PC-3 (cell line): ENCODE measurements at regions of chr12 and their contacts with region 1.

Region 1: GRCh38 chr12:42023733-42024494 is 120.8 kb downstream of the GXYLT1 start:
- DNase-seq: peak; percentile 81
- ATAC-seq: peak; percentile 95
- H3K4me3 ChIP-seq: peak overlapping the region; percentile 61
- H3K27ac ChIP-seq: no peak overlapping the region
- H3K4me1 ChIP-seq: no peaks in the 10 kb centered on the region
- H3K27me3 ChIP-seq: no peaks in the 10 kb centered on the region
- CTCF ChIP-seq: peak; percentile 97

Region 2: GRCh38 chr12:40843495-40843894 is 1180.4 kb before region 1 on chr12:
- CTCF ChIA-PET with region 1: interaction called, 11 read pairs
- POLR2A ChIA-PET with region 1: no interaction called
- intact Hi-C with region 1: no loop called
- DNase-seq: no peak
- ATAC-seq: no peak
- H3K4me3 ChIP-seq: no peak overlapping the region
- H3K27ac ChIP-seq: no peak overlapping the region
- H3K4me1 ChIP-seq: no peaks in the 10 kb centered on the region
- H3K27me3 ChIP-seq: peaks cover 58% of the 10 kb centered on the region
- CTCF ChIP-seq: no peak

Region 3: DNA sequence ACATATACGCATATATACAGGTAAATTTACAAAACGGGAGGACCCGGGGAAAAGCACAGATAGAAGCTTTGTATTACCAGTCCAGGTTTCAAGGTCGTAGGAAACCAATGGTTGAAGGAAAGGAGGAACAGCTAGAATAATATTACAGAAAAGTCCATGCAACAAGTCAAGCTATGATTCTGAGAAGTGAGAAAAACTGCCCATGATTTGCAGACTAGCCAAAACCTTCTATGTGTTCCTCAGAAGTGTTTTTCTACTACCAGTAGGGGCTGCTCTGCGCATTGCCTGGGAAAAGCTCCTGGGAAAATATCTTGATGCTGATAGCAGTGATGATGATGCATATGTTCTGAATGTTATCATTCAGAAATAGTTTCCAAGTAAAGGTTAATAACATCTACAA is 833.6 kb before region 1 on chr12:
- CTCF ChIA-PET with region 1: no interaction called
- POLR2A ChIA-PET with region 1: no interaction called
- intact Hi-C with region 1: loop called (anchors 5 kb)
- DNase-seq: peak; percentile 44
- ATAC-seq: 0 out of 2 replicates have a peak, but pooled peaks have one; percentile 53
- H3K4me3 ChIP-seq: no peak overlapping the region
- H3K27ac ChIP-seq: no peak overlapping the region
- H3K4me1 ChIP-seq: no peaks in the 10 kb centered on the region
- H3K27me3 ChIP-seq: peaks cover 59% of the 10 kb centered on the region
- CTCF ChIP-seq: peak; percentile 59

Region 4: DNA sequence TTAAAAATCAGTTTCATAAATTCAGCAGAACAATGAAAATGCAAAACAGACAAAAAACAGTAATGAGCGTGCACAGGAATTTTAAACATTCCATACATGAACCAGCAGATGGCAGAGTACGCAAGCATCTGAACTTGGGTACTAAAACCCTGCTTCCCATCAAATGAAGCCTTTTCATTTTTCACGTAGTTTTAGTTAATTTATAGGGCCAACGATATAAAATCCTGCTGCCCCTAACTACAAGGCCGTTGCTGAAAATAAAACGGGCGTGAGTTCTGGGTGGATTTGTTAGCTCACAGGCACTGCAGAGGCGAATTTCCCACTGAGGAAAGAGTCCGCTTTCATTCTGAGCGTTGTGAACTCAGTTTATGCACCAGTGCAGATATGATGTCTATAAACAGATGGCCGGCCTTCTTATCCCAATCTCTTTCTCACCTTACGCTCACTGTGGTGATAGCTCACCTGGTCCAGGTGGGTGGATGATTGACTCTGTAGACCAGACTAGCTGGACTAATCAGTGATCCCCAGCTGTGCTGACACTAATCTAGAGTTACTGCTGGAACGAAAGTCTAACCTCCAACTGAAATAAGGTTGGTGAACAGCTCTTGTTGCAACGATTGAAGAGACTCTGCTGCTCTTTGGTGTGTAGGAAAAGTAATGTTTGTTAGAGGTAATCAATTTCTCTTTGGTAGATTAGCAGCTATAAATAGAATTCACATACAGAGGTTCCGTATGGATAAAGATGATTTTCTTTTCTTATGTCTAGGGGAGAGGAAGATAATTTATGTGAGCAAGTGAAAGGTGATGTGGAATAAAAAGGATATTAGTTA is 746.6 kb before region 1 on chr12:
- CTCF ChIA-PET with region 1: no interaction called
- POLR2A ChIA-PET with region 1: no interaction called
- intact Hi-C with region 1: loop called (anchors 2 kb)
- DNase-seq: peak; percentile 57
- ATAC-seq: peak; percentile 50
- H3K4me3 ChIP-seq: no peak overlapping the region
- H3K27ac ChIP-seq: no peak overlapping the region
- H3K4me1 ChIP-seq: no peaks in the 10 kb centered on the region
- H3K27me3 ChIP-seq: peaks cover 20% of the 10 kb centered on the region; the same call in 1 of the 2 replicates
- CTCF ChIP-seq: peak; percentile 85

Region 5: GRCh38 chr12:41536813-41537490 is 487.0 kb before region 1 on chr12:
- CTCF ChIA-PET with region 1: no interaction called
- POLR2A ChIA-PET with region 1: no interaction called
- intact Hi-C with region 1: no loop called
- DNase-seq: no peak
- ATAC-seq: no peak
- H3K4me3 ChIP-seq: no peak overlapping the region
- H3K27ac ChIP-seq: no peak overlapping the region
- H3K4me1 ChIP-seq: no peaks in the 10 kb centered on the region
- H3K27me3 ChIP-seq: 0 out of 2 replicates have a peak, but pooled peaks cover 9% of the 10 kb centered on the region
- CTCF ChIP-seq: no peak

Region 6: GRCh38 chr12:41917855-41918460 is 106.0 kb before region 1 on chr12:
- CTCF ChIA-PET with region 1: no interaction called
- POLR2A ChIA-PET with region 1: no interaction called
- intact Hi-C with region 1: no loop called
- DNase-seq: peak; percentile 36
- ATAC-seq: peak; percentile 43
- H3K4me3 ChIP-seq: no peak overlapping the region
- H3K27ac ChIP-seq: no peak overlapping the region
- H3K4me1 ChIP-seq: no peaks in the 10 kb centered on the region
- H3K27me3 ChIP-seq: peaks cover 50% of the 10 kb centered on the region
- CTCF ChIP-seq: no peak

Region 7: DNA sequence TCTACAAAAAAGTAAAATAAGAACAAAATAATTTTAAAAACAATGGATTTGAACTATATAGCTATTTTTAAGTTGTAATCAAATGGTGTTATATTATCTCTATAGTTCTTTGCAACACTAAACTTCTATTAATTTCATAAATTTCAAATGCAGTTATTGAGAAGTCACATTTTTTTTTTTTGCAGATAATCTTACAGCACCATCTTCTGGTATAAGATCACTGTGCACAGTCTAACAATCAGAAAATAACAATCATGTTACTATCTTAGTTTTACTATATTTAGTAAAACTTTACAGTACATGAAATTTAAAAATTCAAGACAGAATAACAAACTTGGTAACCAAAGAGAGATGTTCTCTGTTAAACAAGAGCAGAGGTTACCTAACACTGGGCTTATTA is 80.2 kb after region 1 on chr12:
- CTCF ChIA-PET with region 1: no interaction called
- POLR2A ChIA-PET with region 1: no interaction called
- intact Hi-C with region 1: loop called (anchors 10 kb)
- DNase-seq: no peak
- ATAC-seq: no peak
- H3K4me3 ChIP-seq: no peak overlapping the region
- H3K27ac ChIP-seq: no peak overlapping the region
- H3K4me1 ChIP-seq: no peaks in the 10 kb centered on the region
- H3K27me3 ChIP-seq: no peaks in the 10 kb centered on the region
- CTCF ChIP-seq: peak; percentile 55; the same call in 1 of the 2 replicates